Esophagus muscularis mucosa (tissue), 4 donors: ENCODE measurements at regions of chr19 and their contacts with region 1.

Region 1: GRCh38 chr19:8505680-8506401 is 3.4 kb upstream of the PRAM1 start:
- DNase-seq: no peak
- H3K4me3 ChIP-seq: peak overlapping the region; percentile 63 to 70 (median 66)
- H3K27ac ChIP-seq: peak overlapping the region; percentile 33 to 59 (median 52)
- H3K4me1 ChIP-seq: peaks cover 11 to 20% (median 17%) of the 10 kb centered on the region in 4 donors
- H3K27me3 ChIP-seq: no peaks in the 10 kb centered on the region
- CTCF ChIP-seq: peak; percentile 86 to 91 (median 90)
- EP300 ChIP-seq: no peak
- POLR2A ChIP-seq: no peak

Region 2: GRCh38 chr19:8355631-8356402 is 150.0 kb before region 1 on chr19:
- intact Hi-C with region 1: loop called (anchors 2 kb)
- DNase-seq: no peak
- H3K4me3 ChIP-seq: no peak overlapping the region
- H3K27ac ChIP-seq: peak overlapping the region in 2 of 4 donors; percentile 13 to 35
- H3K4me1 ChIP-seq: peaks cover 23 to 39% (median 29%) of the 10 kb centered on the region in 4 donors
- H3K27me3 ChIP-seq: peaks cover 0 to 24% (median 0%) of the 10 kb centered on the region in 4 donors
- CTCF ChIP-seq: no peak
- EP300 ChIP-seq: no peak
- POLR2A ChIP-seq: no peak

Region 3: DNA sequence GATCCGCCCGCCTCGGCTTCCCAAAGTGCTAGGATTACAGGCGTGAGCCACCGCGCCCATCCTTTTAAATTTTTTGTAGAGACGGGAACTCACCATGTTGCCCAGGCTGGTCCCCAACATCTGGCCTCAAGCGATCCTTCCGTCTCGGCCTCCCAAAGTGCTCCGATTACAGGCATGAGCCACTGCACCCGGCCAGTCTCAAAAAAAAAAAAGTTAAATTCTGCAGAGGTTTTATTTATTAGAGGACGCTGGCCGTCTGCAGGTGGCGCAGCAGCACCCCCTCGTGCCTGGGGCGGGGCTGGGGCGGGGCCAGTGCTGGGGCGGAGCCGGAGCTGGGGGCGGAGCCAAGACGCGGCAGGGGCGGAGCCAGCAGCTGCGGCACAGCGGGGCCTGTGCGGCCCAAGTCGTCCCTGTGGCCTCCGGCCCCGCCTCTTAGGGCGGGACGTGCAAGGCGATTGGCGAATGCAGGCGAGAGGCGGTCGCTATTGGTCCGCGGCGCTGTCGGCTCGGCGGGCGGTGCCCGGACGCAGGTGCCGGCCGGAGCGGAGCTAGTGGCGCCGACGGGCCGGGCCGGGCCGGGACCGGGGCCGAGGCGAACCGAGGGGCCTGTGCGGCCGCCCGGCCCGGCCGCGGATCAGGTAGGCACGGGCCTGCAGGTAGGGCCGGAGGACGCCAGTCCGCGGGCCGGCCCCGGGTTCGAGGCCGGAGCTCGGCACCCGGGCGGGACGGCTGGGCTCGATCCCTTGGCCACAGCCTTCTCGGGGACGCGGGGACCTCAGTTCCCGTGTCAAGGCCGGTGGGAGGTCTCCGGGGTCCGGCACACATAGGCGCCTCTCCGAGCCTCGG is 92.8 kb before region 1 on chr19 and contains the start of gene MARCHF2:
- intact Hi-C with region 1: loop called (anchors 2 kb)
- DNase-seq: peak; percentile 99
- H3K4me3 ChIP-seq: peak within 1 kb of the TSS; percentile 89 to 94 (median 92)
- H3K27ac ChIP-seq: peak within 1 kb of the TSS; percentile 82 to 94 (median 90)
- H3K4me1 ChIP-seq: peaks cover 38 to 55% (median 50%) of the 10 kb centered on the region in 4 donors
- H3K27me3 ChIP-seq: no peaks in the 10 kb centered on the region
- CTCF ChIP-seq: peak; percentile 71 to 82 (median 79)
- EP300 ChIP-seq: no peak
- POLR2A ChIP-seq: no peak
- total RNA-seq, gene MARCHF2: 227 to 286 (median 247) TPM

Region 4: DNA sequence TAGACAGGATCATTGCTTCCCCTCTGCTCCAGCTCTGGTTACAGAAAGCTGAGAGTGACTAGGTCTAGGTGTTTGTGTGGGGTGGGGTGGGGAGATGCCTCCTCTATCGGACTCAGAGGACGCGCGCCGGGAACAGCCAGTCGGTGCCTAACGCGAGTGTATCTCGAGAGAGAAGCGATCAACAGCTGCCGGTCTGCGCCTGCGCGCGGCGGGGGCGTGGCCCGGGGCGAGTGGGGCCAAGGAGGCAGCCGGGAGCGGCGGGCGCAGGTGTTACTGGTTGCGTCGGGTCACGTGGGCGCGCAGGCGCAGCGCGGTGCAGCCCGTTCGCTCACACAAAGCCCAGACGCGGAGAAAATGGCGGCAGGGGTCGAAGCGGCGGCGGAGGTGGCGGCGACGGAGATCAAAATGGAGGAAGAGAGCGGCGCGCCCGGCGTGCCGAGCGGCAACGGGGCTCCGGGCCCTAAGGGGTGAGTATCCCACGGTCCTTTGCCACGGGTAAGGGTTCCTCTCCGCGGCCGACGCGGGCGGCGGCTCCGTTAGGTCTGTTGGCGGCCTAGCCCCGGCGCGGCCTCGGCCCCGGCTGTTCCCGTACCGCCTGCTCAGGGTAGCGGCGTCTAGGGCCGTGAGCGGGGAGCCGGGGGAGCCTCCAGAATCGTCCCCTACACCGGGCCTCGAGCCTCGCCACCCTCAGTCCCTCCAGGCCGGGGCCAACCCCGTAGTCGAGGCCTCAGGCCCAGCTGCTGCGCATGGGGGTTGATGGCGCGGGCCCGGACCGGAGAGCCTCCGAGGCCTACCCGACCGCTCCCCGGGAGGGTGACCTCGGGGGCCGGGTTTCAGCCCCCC is 61.0 kb before region 1 on chr19 and contains the start of gene HNRNPM:
- intact Hi-C with region 1: loop called (anchors 5 kb)
- DNase-seq: peak; percentile 100
- H3K4me3 ChIP-seq: peak within 1 kb of the TSS; percentile 81 to 99 (median 90)
- H3K27ac ChIP-seq: peak within 1 kb of the TSS; percentile 94 to 98 (median 97)
- H3K4me1 ChIP-seq: peaks cover 42 to 49% (median 46%) of the 10 kb centered on the region in 4 donors
- H3K27me3 ChIP-seq: no peaks in the 10 kb centered on the region
- CTCF ChIP-seq: peak in 1 of 3 experiments; percentile 13
- EP300 ChIP-seq: no peak
- POLR2A ChIP-seq: peak; percentile 91
- total RNA-seq, gene HNRNPM: 103 to 126 (median 116) TPM

Region 5: GRCh38 chr19:8681345-8682029 is 175.6 kb after region 1 on chr19:
- intact Hi-C with region 1: no loop called
- DNase-seq: no peak
- H3K4me3 ChIP-seq: no peak overlapping the region
- H3K27ac ChIP-seq: no peak overlapping the region
- H3K4me1 ChIP-seq: no peaks in the 10 kb centered on the region
- H3K27me3 ChIP-seq: peaks cover 0 to 41% (median 0%) of the 10 kb centered on the region in 4 donors
- CTCF ChIP-seq: no peak
- EP300 ChIP-seq: no peak
- POLR2A ChIP-seq: no peak